PC-3 (cell line): ENCODE measurements at regions of chr19 and their contacts with region 1.

Region 1: DNA sequence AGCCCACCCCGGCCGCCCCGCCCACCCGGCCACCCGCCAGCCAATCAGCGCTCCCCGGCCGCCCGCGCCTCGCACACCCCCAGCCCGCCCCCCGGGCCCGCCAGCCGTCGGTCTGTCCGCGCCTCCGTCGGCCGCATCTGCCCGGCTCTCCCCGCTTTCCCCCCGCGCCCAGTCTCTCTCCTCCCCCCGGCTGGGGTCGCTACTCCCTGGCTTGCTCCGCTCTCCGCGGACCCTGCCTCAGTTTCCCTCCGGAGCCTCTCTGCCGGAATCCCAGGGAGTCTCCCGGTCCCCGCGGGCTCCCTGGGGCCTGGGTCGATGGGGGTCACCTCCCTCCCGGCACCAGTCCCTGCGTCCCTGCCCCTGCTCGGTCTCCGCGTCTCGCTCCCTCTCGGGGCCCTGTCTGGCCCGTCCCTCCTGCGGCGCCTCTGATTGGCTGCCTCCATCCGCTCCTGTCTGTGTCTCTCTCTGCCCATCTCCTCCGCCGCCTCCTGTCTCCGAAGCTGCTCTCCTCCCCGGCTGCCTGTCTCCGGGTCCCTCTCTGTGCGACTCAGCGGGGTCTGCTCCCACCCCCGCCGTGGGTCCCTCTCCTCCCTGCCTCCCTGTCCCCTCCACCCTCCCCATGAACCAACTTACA is 475 bp downstream of the IL11 start:
- DNase-seq: peak; percentile 72
- ATAC-seq: peak; percentile 68
- H3K4me3 ChIP-seq: peak overlapping the region; percentile 77
- H3K27ac ChIP-seq: peak overlapping the region; percentile 14; the same call in 1 of the 2 replicates
- H3K4me1 ChIP-seq: peaks cover 44% of the 10 kb centered on the region
- H3K27me3 ChIP-seq: no peaks in the 10 kb centered on the region
- CTCF ChIP-seq: no peak

Region 2: DNA sequence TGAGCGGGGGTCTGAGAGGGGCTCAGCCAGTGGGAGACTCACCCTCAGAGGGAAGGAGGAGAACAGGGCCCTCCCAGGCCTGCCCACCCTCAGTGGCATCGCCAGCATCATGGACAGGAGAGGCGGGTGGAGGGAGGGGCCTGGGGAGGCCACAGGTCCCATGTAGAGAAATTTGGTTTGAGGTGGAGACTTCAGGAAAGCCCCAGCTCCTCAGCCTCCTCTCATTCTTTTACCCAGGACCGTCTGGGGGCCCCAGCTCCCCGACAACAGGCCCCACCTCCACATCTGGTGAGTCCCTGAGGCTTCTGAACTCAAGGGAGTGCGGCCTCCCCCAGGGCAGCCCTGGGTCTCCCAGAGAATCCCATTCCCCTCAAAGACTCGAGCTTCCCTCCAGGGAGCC is 736.4 kb before region 1 on chr19:
- CTCF ChIA-PET with region 1: interaction called, 20 read pairs
- POLR2A ChIA-PET with region 1: no interaction called
- intact Hi-C with region 1: no loop called
- DNase-seq: no peak
- ATAC-seq: no peak
- H3K4me3 ChIP-seq: no peak overlapping the region
- H3K27ac ChIP-seq: no peak overlapping the region
- H3K4me1 ChIP-seq: no peaks in the 10 kb centered on the region; the same call in 1 of the 2 replicates
- H3K27me3 ChIP-seq: peaks cover 69% of the 10 kb centered on the region
- CTCF ChIP-seq: no peak